Activated T-helper 1 cell treated with anti-CD3 and anti-CD28 coated beads, Interleukin-12 subunit alpha, Interleukin-12 subunit beta, Interleukin-2, Interleukin-4 antibody, amounts not matched to agents 30 ng/mL and 10 ng/mL and 1 ng/mL, durations not matched to agents 14 hours and 24 hours and 36 hours (primary cell): ENCODE measurements at regions of chr3 and their contacts with region 1.

Region 1: GRCh38 chr3:190696777-190697501 is 165.6 kb downstream of the GMNC start:
- DNase-seq: no peak
- H3K4me3 Mint-ChIP-seq: no peak overlapping the region
- H3K27ac Mint-ChIP-seq: no peak overlapping the region
- H3K4me1 Mint-ChIP-seq: peaks cover 19% of the 10 kb centered on the region
- H3K27me3 Mint-ChIP-seq: peaks cover 13% of the 10 kb centered on the region

Region 2: DNA sequence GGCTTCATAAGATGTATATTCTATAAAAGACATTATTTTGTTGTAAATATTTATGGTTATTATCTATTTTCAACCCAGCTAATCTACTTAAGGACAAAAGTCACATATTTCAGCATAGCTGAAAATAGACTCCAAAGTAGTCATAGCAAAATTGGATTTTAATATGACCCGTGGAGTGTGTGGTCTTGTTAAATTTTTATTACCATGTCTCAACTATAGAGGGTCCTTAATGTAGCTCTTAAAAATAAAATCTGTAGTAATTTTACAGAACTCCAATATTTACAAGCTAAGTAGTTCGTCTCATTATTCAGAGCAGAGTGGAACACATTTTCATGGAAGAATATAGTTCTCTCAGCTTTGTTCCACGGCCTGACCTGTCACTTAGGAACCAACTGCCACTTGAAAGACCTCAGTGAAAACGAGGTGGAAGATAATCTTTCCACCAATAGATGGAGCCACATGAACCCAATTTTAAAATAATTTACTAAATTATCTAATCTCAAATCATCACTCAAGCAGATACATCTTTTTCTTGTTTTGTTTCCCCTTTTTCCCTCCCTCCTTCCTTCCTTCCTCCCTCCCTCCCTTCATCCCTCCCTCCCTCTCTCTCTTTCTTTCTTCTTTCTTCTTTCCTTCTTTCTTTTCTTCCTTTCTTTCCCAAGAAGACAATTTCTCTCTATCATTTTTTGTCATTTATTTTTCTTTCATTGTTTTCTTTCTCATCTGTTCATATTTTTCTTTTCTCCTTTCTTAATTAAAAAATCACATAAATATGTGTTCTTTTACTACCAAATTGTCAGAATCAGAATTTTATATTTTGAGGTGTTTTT is 471.9 kb before region 1 on chr3:
- intact Hi-C with region 1: loop called (anchors 5 kb)
- DNase-seq: no peak
- H3K4me3 Mint-ChIP-seq: no peak overlapping the region
- H3K27ac Mint-ChIP-seq: no peak overlapping the region
- H3K4me1 Mint-ChIP-seq: no peaks in the 10 kb centered on the region
- H3K27me3 Mint-ChIP-seq: peaks cover 2% of the 10 kb centered on the region

Region 3: GRCh38 chr3:190384241-190384863 is 312.6 kb before region 1 on chr3:
- intact Hi-C with region 1: loop called (anchors 5 kb)
- DNase-seq: no peak
- H3K4me3 Mint-ChIP-seq: no peak overlapping the region
- H3K27ac Mint-ChIP-seq: no peak overlapping the region
- H3K4me1 Mint-ChIP-seq: no peaks in the 10 kb centered on the region
- H3K27me3 Mint-ChIP-seq: no peaks in the 10 kb centered on the region

Region 4: DNA sequence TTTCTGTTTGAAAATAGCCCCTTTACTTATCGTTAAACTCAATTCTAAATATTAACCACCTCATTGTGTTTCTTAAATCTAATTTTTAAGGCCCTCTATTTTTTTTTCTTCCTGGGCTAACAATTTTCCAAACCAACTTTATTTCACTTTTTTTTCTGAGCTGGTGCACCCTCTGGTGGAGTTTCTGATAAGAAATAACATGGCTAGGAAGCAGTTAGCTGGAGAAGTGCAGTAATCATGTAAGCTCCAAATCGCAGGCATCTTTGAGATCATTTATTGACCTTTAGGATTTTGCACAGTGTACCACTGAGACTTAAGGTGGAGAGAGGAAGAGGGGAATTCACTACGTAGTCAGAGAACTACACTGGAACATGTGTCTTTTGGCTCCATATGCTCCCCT is 253.7 kb before region 1 on chr3:
- intact Hi-C with region 1: loop called (anchors 5 kb)
- DNase-seq: no peak
- H3K4me3 Mint-ChIP-seq: no peak overlapping the region
- H3K27ac Mint-ChIP-seq: no peak overlapping the region
- H3K4me1 Mint-ChIP-seq: peaks cover 9% of the 10 kb centered on the region
- H3K27me3 Mint-ChIP-seq: peaks cover 8% of the 10 kb centered on the region

Region 5: GRCh38 chr3:190513409-190514162 is 183.4 kb before region 1 on chr3 and contains the start of gene IL1RAP:
- intact Hi-C with region 1: loop called (anchors 1 kb)
- DNase-seq: peak; percentile 88
- H3K4me3 Mint-ChIP-seq: peak within 1 kb of the TSS; percentile 89
- H3K27ac Mint-ChIP-seq: peak within 1 kb of the TSS; percentile 98
- H3K4me1 Mint-ChIP-seq: peaks cover 49% of the 10 kb centered on the region
- H3K27me3 Mint-ChIP-seq: peaks cover 3% of the 10 kb centered on the region
- total RNA-seq, gene IL1RAP: 26.4 and 31.6 TPM in 2 replicates

Region 6: GRCh38 chr3:190585805-190586630 is 110.9 kb before region 1 on chr3:
- intact Hi-C with region 1: loop called (anchors 1 kb)
- DNase-seq: peak; percentile 49
- H3K4me3 Mint-ChIP-seq: peak overlapping the region; percentile 72
- H3K27ac Mint-ChIP-seq: peak overlapping the region; percentile 97
- H3K4me1 Mint-ChIP-seq: peaks cover 46% of the 10 kb centered on the region
- H3K27me3 Mint-ChIP-seq: no peaks in the 10 kb centered on the region

Region 7: DNA sequence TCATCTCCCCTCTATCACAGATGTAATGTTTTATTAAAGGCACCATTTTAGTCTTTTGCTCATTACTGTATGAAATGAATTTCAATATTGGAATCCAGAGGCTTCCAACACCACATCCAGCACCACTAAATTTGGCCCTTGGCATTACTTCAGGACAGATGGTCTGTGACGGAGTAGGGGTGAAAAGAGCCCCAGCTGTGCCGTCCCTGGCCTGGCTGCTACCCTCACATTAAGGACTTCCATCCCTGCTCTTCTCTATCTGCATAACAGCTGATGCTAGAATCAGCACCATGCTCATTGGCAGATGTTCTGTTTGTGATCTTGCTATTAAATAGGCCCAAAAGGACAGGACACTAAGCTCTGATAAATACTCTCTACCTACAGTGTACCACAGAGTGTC is 30.1 kb before region 1 on chr3:
- intact Hi-C with region 1: no loop called
- DNase-seq: no peak
- H3K4me3 Mint-ChIP-seq: no peak overlapping the region
- H3K27ac Mint-ChIP-seq: no peak overlapping the region
- H3K4me1 Mint-ChIP-seq: no peaks in the 10 kb centered on the region
- H3K27me3 Mint-ChIP-seq: peaks cover 6% of the 10 kb centered on the region